ENCODE measurements at regions of chr4 and their contacts with region 1.

Region 1: GRCh38 chr4:79788884-79789283 is 284.1 kb downstream of the ANTXR2 start:
- DNase-seq: no peak
- H3K4me3 ChIP-seq: no peak overlapping the region
- CTCF ChIP-seq: no peak
- POLR2A ChIP-seq: no peak

Region 2: GRCh38 chr4:79164907-79165610 is 623.8 kb before region 1 on chr4:
- intact Hi-C with region 1: loop called (anchors 5 kb)
- DNase-seq: no peak
- H3K4me3 ChIP-seq: no peak overlapping the region
- CTCF ChIP-seq: no peak
- POLR2A ChIP-seq: no peak

Region 3: GRCh38 chr4:79757600-79757999 is 31.3 kb before region 1 on chr4:
- intact Hi-C with region 1: no loop called
- DNase-seq: no peak
- H3K4me3 ChIP-seq: no peak overlapping the region
- CTCF ChIP-seq: no peak
- POLR2A ChIP-seq: no peak

Region 4: DNA sequence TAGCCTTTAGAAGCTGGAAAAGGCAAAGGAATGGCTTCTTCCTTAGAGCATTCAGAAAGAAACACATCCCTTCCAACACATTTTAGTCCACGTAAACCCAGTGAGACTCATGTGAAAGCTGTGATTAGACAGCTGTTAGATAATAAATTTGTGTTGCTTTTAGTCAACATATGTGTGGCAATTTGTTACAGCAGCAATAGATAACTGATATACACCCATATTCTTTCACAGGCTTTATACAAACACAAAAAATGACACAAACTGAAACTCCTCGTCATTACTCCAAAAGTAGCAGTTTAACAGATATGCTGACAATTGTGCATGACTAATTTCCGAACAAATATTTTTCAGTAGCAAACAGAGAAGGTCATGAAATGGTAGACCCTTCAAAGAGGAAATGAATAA is 218.9 kb after region 1 on chr4:
- intact Hi-C with region 1: no loop called
- DNase-seq: no peak
- H3K4me3 ChIP-seq: no peak overlapping the region
- CTCF ChIP-seq: no peak
- POLR2A ChIP-seq: no peak